CD8-positive, alpha-beta T cell (primary cell): ENCODE measurements at regions of chr5 and their contacts with region 1.

Region 1: GRCh38 chr5:171907725-171908343 is 98.6 kb downstream of the FBXW11 start:
- DNase-seq: peak; percentile 11 to 69 (median 41)
- ATAC-seq: peak; percentile 71
- H3K4me3 ChIP-seq: no peak overlapping the region
- H3K4me3 Mint-ChIP-seq: no peak overlapping the region
- H3K27ac ChIP-seq: no peak overlapping the region
- H3K27ac Mint-ChIP-seq: no peak overlapping the region
- H3K4me1 ChIP-seq: no peaks in the 10 kb centered on the region
- H3K4me1 Mint-ChIP-seq: peaks cover 41% of the 10 kb centered on the region
- H3K27me3 ChIP-seq: no peaks in the 10 kb centered on the region
- H3K27me3 Mint-ChIP-seq: no peaks in the 10 kb centered on the region
- CTCF ChIP-seq: peak; percentile 86

Region 2: DNA sequence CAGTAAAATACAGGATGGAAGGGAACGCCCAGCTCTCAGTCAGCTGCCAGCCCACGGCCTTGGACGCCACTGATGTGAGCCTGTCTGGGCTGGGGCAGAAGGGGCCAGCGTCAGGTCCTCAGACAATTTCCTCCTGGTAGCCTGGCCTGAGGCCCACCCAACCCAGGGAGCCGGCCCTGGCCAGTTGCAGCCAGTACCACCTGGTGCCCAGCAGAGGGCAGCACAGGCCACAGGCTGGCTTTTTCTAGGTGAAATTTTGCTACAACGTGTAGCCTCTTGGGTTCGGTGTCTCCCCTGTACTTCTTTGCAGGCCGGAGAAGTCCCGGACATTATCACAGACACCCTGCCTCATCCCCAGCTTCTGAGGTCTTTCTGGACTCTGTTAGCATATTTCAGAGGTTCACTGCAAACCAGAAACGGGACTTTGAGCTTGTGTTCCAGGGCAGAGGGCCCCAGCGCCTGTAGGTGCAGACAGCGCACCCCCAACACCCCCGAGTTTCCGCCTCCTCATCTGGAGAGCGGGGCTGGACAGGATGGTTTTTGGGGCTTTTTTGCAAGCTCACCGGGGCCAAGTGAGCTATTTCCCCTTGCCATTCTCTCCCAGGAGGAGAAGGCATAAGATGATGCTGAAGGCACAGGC is 1472.7 kb before region 1 on chr5:
- CTCF ChIA-PET with region 1: no interaction called
- POLR2A ChIA-PET with region 1: no interaction called
- intact Hi-C with region 1: loop called in 1 of 2 experiments (anchors 5 kb)
- DNase-seq: peak; percentile 14 to 68 (median 54)
- ATAC-seq: peak; percentile 75
- H3K4me3 ChIP-seq: no peak overlapping the region
- H3K4me3 Mint-ChIP-seq: no peak overlapping the region
- H3K27ac ChIP-seq: no peak overlapping the region
- H3K27ac Mint-ChIP-seq: no peak overlapping the region
- H3K4me1 ChIP-seq: no peaks in the 10 kb centered on the region
- H3K4me1 Mint-ChIP-seq: no peaks in the 10 kb centered on the region
- H3K27me3 ChIP-seq: no peaks in the 10 kb centered on the region
- H3K27me3 Mint-ChIP-seq: no peaks in the 10 kb centered on the region
- CTCF ChIP-seq: peak; percentile 92

Region 3: GRCh38 chr5:170747851-170748250 is 1160.0 kb before region 1 on chr5:
- CTCF ChIA-PET with region 1: interaction called, 3 read pairs
- POLR2A ChIA-PET with region 1: no interaction called
- intact Hi-C with region 1: loop called (anchors 10 kb)
- DNase-seq: no peak
- ATAC-seq: no peak
- H3K4me3 ChIP-seq: no peak overlapping the region
- H3K4me3 Mint-ChIP-seq: no peak overlapping the region
- H3K27ac ChIP-seq: no peak overlapping the region
- H3K27ac Mint-ChIP-seq: no peak overlapping the region
- H3K4me1 ChIP-seq: no peaks in the 10 kb centered on the region
- H3K4me1 Mint-ChIP-seq: peaks cover 5% of the 10 kb centered on the region
- H3K27me3 ChIP-seq: no peaks in the 10 kb centered on the region
- H3K27me3 Mint-ChIP-seq: peaks cover 38% of the 10 kb centered on the region
- CTCF ChIP-seq: no peak

Region 4: DNA sequence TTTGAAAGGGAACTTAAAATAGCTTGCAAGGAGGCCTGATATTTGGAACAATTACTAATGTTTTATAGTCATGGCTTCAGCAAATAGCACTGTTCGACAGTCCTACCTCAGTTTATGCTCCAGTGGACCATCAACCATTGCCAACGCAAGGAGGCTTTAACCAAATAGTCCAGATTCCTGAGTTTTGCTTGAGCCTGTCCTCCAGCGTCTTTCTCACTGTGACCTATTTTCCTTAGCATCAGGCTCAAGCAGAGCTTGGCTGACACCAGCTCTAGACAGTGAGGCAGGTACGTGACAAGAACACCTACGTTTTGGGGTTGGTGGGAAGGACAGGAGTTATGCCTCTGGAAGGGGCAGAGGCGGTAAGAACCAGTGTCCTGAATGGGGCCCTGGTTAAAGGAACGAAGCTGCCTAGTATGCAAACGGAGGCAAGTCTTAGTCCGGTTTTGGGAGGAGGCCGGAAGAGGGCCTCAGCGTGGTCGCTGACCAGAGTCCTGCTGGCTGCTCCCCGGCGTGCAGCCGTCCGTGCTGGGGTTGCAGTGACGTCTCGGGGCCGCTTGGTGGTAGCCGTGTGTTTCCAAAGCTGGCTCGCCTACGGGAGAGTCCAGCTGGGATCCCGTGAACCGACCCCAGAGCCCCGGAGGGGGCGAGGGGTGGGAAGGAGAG is 489.4 kb before region 1 on chr5:
- CTCF ChIA-PET with region 1: interaction called, 22 read pairs
- POLR2A ChIA-PET with region 1: no interaction called
- intact Hi-C with region 1: loop called (anchors 1 to 2 kb)
- DNase-seq: peak in 7 of 9 experiments; percentile 18 to 66 (median 46)
- ATAC-seq: peak; percentile 55
- H3K4me3 ChIP-seq: peak overlapping the region; percentile 48 to 58
- H3K4me3 Mint-ChIP-seq: peak overlapping the region; percentile 74
- H3K27ac ChIP-seq: no peak overlapping the region
- H3K27ac Mint-ChIP-seq: no peak overlapping the region
- H3K4me1 ChIP-seq: peaks cover 18% of the 10 kb centered on the region
- H3K4me1 Mint-ChIP-seq: peaks cover 9% of the 10 kb centered on the region
- H3K27me3 ChIP-seq: peaks cover 11% of the 10 kb centered on the region in 2 experiments
- H3K27me3 Mint-ChIP-seq: peaks cover 27% of the 10 kb centered on the region
- CTCF ChIP-seq: peak; percentile 60

Region 5: GRCh38 chr5:172035039-172035438 is 127.2 kb after region 1 on chr5:
- CTCF ChIA-PET with region 1: interaction called, 54 read pairs
- POLR2A ChIA-PET with region 1: no interaction called
- intact Hi-C with region 1: loop called (anchors 1 kb)
- DNase-seq: no peak
- ATAC-seq: no peak
- H3K4me3 ChIP-seq: no peak overlapping the region
- H3K4me3 Mint-ChIP-seq: no peak overlapping the region
- H3K27ac ChIP-seq: no peak overlapping the region
- H3K27ac Mint-ChIP-seq: no peak overlapping the region
- H3K4me1 ChIP-seq: no peaks in the 10 kb centered on the region
- H3K4me1 Mint-ChIP-seq: peaks cover 11% of the 10 kb centered on the region
- H3K27me3 ChIP-seq: no peaks in the 10 kb centered on the region
- H3K27me3 Mint-ChIP-seq: no peaks in the 10 kb centered on the region
- CTCF ChIP-seq: no peak

Region 6: DNA sequence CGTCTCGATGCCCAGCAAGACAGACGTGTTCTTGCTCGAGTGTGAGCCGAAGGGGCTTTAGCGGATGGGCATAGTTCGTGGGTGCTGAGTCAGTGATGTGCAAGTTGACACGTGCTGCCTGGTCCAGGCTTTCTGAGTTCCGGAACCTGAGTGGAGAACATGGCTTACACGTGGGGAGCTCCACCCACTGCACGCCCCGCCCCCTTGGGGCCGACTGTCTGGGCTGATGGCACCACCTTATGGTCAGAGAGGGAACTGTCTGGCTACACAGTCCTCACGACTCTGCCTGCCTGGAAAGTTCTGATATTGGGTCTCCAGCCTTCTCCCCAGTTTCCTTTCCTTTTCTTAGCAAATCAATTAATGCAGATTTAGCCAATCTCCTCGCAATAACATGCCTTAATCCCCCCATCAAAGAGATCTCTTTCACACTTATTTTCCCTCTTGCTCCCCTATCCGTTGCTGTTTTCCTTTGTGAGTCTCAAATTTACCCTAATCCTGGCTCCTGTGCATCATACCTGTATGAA is 1424.2 kb after region 1 on chr5:
- CTCF ChIA-PET with region 1: no interaction called
- POLR2A ChIA-PET with region 1: no interaction called
- intact Hi-C with region 1: no loop called
- DNase-seq: peak; percentile 24 to 69 (median 61)
- ATAC-seq: peak; percentile 96
- H3K4me3 ChIP-seq: no peak overlapping the region
- H3K4me3 Mint-ChIP-seq: no peak overlapping the region
- H3K27ac ChIP-seq: no peak overlapping the region
- H3K27ac Mint-ChIP-seq: no peak overlapping the region
- H3K4me1 ChIP-seq: no peaks in the 10 kb centered on the region
- H3K4me1 Mint-ChIP-seq: peaks cover 14% of the 10 kb centered on the region
- H3K27me3 ChIP-seq: peaks cover 0 to 8% of the 10 kb centered on the region in 2 experiments
- H3K27me3 Mint-ChIP-seq: peaks cover 54% of the 10 kb centered on the region
- CTCF ChIP-seq: peak; percentile 45